Cardiac septum (tissue), 1 donor: ENCODE measurements at regions of chr5 and their contacts with region 1.

Region 1: DNA sequence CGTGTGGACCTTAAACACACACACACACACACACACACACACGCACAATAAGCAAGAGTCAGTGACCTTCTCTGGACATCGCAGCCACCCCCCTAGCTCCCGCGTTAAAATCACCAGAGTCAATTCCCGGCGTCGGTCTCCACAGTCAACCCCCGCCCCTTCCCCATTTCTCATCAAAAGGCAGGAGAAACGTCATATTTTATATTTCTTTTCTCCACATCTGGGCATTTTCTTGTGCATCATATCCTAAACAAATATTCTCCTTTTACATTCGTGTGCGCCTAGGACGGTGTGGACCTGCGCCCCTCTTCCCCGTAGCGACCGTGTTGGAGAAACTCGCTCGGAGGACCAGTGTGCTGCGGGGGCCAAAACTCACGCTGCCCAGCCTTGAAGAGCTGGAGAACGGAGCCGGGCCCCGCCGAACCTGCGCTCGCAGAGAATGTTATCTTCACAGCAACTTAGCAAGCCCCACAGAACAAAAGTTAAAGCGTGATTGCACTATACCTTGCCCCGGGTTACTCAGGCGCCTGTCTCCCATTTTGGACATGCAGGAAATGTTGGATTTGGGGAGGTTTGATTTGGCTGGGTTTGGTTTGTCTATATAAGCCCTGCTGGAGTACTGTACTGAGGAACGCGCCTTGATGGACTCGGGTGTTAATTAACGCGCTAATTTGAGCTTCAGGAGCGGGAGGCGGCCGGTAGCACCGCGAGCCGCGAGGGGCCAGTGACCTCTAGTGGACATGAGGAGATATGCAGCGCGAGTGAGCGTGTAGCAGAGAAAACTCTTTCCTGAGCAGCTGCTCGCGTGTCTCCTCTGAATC is 192.4 kb downstream of the MEF2C start:
- DNase-seq: peak; percentile 87

Region 2: GRCh38 chr5:87780831-87781760 is 909.5 kb before region 1 on chr5:
- intact Hi-C with region 1: loop called (anchors 2 kb)
- DNase-seq: peak; percentile 84